H1 (cell line): ENCODE measurements at regions of chr12 and their contacts with region 1.

Region 1: DNA sequence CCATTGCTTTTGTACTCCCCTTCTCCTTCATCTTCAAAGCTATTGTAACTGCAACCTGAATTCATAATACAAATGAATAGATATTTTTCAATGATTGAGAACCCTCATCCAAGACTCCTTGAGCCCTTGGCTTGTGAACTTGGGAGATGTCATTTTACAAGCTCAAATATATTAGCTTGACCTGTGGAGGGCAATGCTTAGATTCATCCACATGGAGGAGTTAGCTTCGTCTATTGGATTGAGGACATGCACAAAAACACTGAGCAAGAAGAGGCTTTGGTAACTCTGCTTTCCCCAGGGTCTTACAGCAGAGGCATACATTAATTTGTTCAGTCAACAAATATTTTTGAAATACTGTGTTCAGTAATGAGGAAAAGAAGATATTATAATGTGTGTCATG is 101.1 kb downstream of the OTOGL start:
- DNase-seq: no peak
- H3K4me3 ChIP-seq: no peak overlapping the region
- H3K27ac ChIP-seq: no peak overlapping the region
- H3K4me1 ChIP-seq: no peaks in the 10 kb centered on the region
- H3K27me3 ChIP-seq: no peaks in the 10 kb centered on the region
- CTCF ChIP-seq: peak in 1 of 3 experiments; percentile 9; a peak in 2 of 4 replicates
- EP300 ChIP-seq: no peak
- POLR2A ChIP-seq: no peak
- RAD21 ChIP-seq: 0 out of 4 replicates have a peak, but pooled peaks have one; percentile 10 to 12

Region 2: GRCh38 chr12:80186727-80187217 is 13.6 kb before region 1 on chr12:
- CTCF ChIA-PET with region 1: interaction called, 11 read pairs
- POLR2A ChIA-PET with region 1: no interaction called
- DNase-seq: no peak
- H3K4me3 ChIP-seq: no peak overlapping the region
- H3K27ac ChIP-seq: no peak overlapping the region; the same call in 1 of the 2 replicates
- H3K4me1 ChIP-seq: 0 out of 7 replicates have a peak, but pooled peaks cover 0 to 2% (median 0%) of the 10 kb centered on the region in 4 experiments
- H3K27me3 ChIP-seq: no peaks in the 10 kb centered on the region; a peak in 1 of 7 replicates
- CTCF ChIP-seq: peak in 2 of 3 experiments; percentile 63 to 81; a peak in 3 of 4 replicates
- EP300 ChIP-seq: peak in 1 of 2 experiments; percentile 44; a peak in 1 of 3 replicates
- POLR2A ChIP-seq: no peak
- RAD21 ChIP-seq: peak; percentile 86 to 88